Lower lobe of right lung (tissue), 2 donors: ENCODE measurements at regions of chr7 and their contacts with region 1.

Region 1: GRCh38 chr7:56074371-56074791 is 10.3 kb downstream of the SUMF2 start:
- DNase-seq: peak; percentile 91
- ATAC-seq: peak; percentile 97
- H3K4me3 ChIP-seq: no peak overlapping the region
- H3K27ac ChIP-seq: no peak overlapping the region
- H3K4me1 ChIP-seq: peaks cover 5% of the 10 kb centered on the region
- H3K27me3 ChIP-seq: no peaks in the 10 kb centered on the region
- CTCF ChIP-seq: peak; percentile 94

Region 2: DNA sequence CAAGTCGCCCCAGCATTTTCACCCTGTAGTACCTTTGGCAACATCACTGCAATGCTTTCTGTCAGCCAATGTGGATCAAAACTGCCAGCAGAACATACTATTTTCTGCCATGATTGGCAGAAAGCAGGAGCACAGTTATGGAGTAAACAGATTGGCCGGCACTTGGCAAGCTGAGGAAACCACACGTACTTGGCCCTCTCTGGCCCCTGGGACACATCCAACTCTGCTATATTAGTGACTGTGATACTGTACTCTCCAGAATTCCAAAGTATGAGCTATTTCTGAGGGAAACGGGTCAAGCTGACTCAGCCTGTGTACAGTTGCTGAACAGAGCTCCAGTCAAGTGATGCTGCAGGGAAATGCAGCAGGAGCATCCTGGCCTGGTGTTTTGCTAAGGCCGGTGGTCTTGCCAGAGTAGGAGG is 749.0 kb before region 1 on chr7:
- intact Hi-C with region 1: no loop called
- DNase-seq: no peak
- ATAC-seq: peak; percentile 71 to 83
- H3K4me3 ChIP-seq: no peak overlapping the region
- H3K27ac ChIP-seq: no peak overlapping the region
- H3K4me1 ChIP-seq: no peaks in the 10 kb centered on the region
- H3K27me3 ChIP-seq: no peaks in the 10 kb centered on the region
- CTCF ChIP-seq: no peak

Region 3: GRCh38 chr7:56009695-56010094 is 64.7 kb before region 1 on chr7:
- intact Hi-C with region 1: loop called (anchors 10 kb)
- DNase-seq: no peak
- ATAC-seq: no peak
- H3K4me3 ChIP-seq: no peak overlapping the region
- H3K27ac ChIP-seq: no peak overlapping the region
- H3K4me1 ChIP-seq: no peaks in the 10 kb centered on the region
- H3K27me3 ChIP-seq: no peaks in the 10 kb centered on the region
- CTCF ChIP-seq: no peak

Region 4: GRCh38 chr7:56447864-56448693 is 373.7 kb after region 1 on chr7:
- intact Hi-C with region 1: no loop called
- DNase-seq: no peak
- ATAC-seq: no peak
- H3K4me3 ChIP-seq: no peak overlapping the region
- H3K27ac ChIP-seq: no peak overlapping the region
- H3K4me1 ChIP-seq: no peaks in the 10 kb centered on the region
- H3K27me3 ChIP-seq: no peaks in the 10 kb centered on the region
- CTCF ChIP-seq: no peak